Sciatic nerve (tissue), 2 donors: ENCODE measurements at regions of chr4 and their contacts with region 1.

Region 1: GRCh38 chr4:37765741-37766140 is 60.7 kb upstream of the PGM2 start:
- DNase-seq: no peak
- ATAC-seq: no peak

Region 2: DNA sequence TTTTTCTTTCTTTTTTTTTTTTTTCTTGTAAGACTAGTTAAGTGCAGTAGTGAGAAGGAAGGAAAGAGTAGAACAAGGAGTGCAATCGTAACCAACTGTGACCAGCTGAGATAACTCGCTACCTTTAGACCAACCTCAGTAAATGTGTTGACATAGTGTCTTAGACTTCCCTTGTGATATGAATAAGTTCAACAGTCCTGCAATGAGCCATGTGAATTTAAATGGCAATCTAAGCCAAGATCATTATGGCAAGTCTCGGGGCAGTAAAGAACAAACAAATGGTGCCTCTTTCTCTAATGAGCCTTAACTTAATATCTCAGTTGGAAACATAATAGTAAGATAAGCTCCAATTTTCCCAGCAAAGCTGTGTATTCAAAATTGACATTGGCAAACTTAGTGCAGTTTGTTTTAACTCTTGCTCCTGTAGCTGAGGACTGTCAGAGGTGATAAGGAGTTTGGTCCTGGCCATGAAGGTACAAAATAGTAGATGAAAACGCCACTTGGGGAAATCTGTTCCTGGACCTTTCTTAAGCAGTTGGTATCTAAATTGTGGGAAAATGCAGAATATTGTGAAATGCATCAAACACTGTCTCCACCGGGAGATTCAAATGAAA is 65.8 kb before region 1 on chr4:
- intact Hi-C with region 1: loop called (anchors 2 kb)
- DNase-seq: no peak
- ATAC-seq: no peak